Activated CD4-positive, alpha-beta T cell treated with anti-CD3 and anti-CD28 coated beads, Interleukin-2, amount 10 ng/mL, durations not matched to agents 24 days and 14 days (primary cell): ENCODE measurements at regions of chr2 and their contacts with region 1.

Region 1: GRCh38 chr2:178414266-178415247 is 36.4 kb downstream of the PRKRA start:
- DNase-seq: peak; percentile 94
- H3K4me3 Mint-ChIP-seq: peak overlapping the region; percentile 97
- H3K27ac Mint-ChIP-seq: peak overlapping the region; percentile 99
- H3K4me1 Mint-ChIP-seq: peaks cover 35% of the 10 kb centered on the region
- H3K27me3 Mint-ChIP-seq: peaks cover 3% of the 10 kb centered on the region

Region 2: GRCh38 chr2:178112202-178113152 is 302.1 kb before region 1 on chr2 and contains the start of gene RBM45:
- intact Hi-C with region 1: loop called (anchors 2 kb)
- DNase-seq: peak; percentile 96
- H3K4me3 Mint-ChIP-seq: peak within 1 kb of the TSS; percentile 87
- H3K27ac Mint-ChIP-seq: peak within 1 kb of the TSS; percentile 88
- H3K4me1 Mint-ChIP-seq: peaks cover 27% of the 10 kb centered on the region
- H3K27me3 Mint-ChIP-seq: no peaks in the 10 kb centered on the region
- total RNA-seq, gene RBM45: 16.8 and 22.8 TPM in 2 replicates

Region 3: GRCh38 chr2:178256382-178257042 is 158.0 kb before region 1 on chr2:
- intact Hi-C with region 1: no loop called
- DNase-seq: no peak
- H3K4me3 Mint-ChIP-seq: no peak overlapping the region
- H3K27ac Mint-ChIP-seq: no peak overlapping the region
- H3K4me1 Mint-ChIP-seq: no peaks in the 10 kb centered on the region
- H3K27me3 Mint-ChIP-seq: peaks cover 11% of the 10 kb centered on the region

Region 4: GRCh38 chr2:178306352-178307073 is 108.0 kb before region 1 on chr2:
- intact Hi-C with region 1: loop called (anchors 1 kb)
- DNase-seq: peak; percentile 82
- H3K4me3 Mint-ChIP-seq: no peak overlapping the region
- H3K27ac Mint-ChIP-seq: no peak overlapping the region
- H3K4me1 Mint-ChIP-seq: peaks cover 2% of the 10 kb centered on the region
- H3K27me3 Mint-ChIP-seq: peaks cover 32% of the 10 kb centered on the region

Region 5: GRCh38 chr2:178404368-178404767 is 10.2 kb before region 1 on chr2:
- intact Hi-C with region 1: loop called (anchors 1 kb)
- DNase-seq: peak; percentile 79
- H3K4me3 Mint-ChIP-seq: peak overlapping the region; percentile 64
- H3K27ac Mint-ChIP-seq: peak overlapping the region; percentile 87
- H3K4me1 Mint-ChIP-seq: peaks cover 21% of the 10 kb centered on the region
- H3K27me3 Mint-ChIP-seq: peaks cover 4% of the 10 kb centered on the region

Region 6: GRCh38 chr2:178506524-178506923 is 92.0 kb after region 1 on chr2:
- intact Hi-C with region 1: no loop called
- DNase-seq: no peak
- H3K4me3 Mint-ChIP-seq: no peak overlapping the region
- H3K27ac Mint-ChIP-seq: no peak overlapping the region
- H3K4me1 Mint-ChIP-seq: peaks cover 13% of the 10 kb centered on the region
- H3K27me3 Mint-ChIP-seq: no peaks in the 10 kb centered on the region

Region 7: GRCh38 chr2:178522950-178523595 is 108.5 kb after region 1 on chr2:
- intact Hi-C with region 1: loop called (anchors 1 kb)
- DNase-seq: peak; percentile 96
- H3K4me3 Mint-ChIP-seq: peak overlapping the region; percentile 95
- H3K27ac Mint-ChIP-seq: peak overlapping the region; percentile 91
- H3K4me1 Mint-ChIP-seq: peaks cover 37% of the 10 kb centered on the region
- H3K27me3 Mint-ChIP-seq: no peaks in the 10 kb centered on the region